ENCODE measurements at regions of chr22 and their contacts with region 1.

Region 1: GRCh38 chr22:39343259-39344048 is 6.3 kb upstream of the SYNGR1 start:
- DNase-seq: peak; percentile 69 to 72
- H3K4me3 ChIP-seq: no peak overlapping the region
- H3K27ac ChIP-seq: no peak overlapping the region
- H3K4me1 ChIP-seq: peaks cover 16% of the 10 kb centered on the region
- H3K27me3 ChIP-seq: no peaks in the 10 kb centered on the region
- CTCF ChIP-seq: peak; percentile 83

Region 2: DNA sequence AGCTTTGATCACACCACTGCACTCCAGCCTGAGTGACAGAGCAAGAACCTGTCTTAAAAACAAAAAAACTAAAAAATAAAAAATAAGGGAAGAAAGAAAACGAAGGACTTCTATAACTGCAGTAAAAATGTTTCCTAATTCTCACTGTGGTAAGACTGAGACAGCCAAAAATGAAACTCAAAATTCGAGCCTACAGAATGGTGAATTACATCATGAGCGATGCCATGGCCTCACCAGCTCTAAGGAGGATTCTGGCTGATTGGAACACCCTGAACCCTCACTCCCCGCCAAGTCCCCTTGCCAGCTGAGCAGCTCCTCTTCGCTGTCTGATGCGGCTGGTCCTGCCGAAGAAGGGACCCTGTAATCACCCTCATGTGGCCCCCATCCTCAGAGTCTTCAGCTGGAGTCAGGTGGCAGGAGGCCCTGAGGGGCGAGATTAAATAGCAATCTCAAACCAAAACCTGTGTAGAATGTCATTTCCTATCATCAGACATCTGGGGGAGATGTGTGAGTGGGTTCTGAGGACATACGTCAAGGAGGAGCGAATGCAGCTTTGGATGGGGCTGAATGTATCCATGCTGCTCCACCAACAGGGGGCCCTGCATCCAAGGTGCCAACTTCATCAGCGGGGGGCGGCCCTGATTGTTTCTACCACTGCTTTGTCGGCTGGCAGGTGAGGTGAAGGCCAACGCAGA is 127.9 kb before region 1 on chr22:
- CTCF ChIA-PET with region 1: no interaction called
- POLR2A ChIA-PET with region 1: no interaction called
- intact Hi-C with region 1: no loop called
- DNase-seq: no peak
- H3K4me3 ChIP-seq: peak overlapping the region; percentile 55; the same call in 1 of the 2 replicates
- H3K27ac ChIP-seq: peak overlapping the region; percentile 87
- H3K4me1 ChIP-seq: peaks cover 51% of the 10 kb centered on the region
- H3K27me3 ChIP-seq: no peaks in the 10 kb centered on the region
- CTCF ChIP-seq: peak; percentile 47; the same call in 1 of the 2 replicates

Region 3: GRCh38 chr22:39234269-39234787 is 109.1 kb before region 1 on chr22:
- CTCF ChIA-PET with region 1: no interaction called
- POLR2A ChIA-PET with region 1: no interaction called
- intact Hi-C with region 1: no loop called
- DNase-seq: no peak
- H3K4me3 ChIP-seq: no peak overlapping the region
- H3K27ac ChIP-seq: no peak overlapping the region
- H3K4me1 ChIP-seq: peaks cover 27% of the 10 kb centered on the region
- H3K27me3 ChIP-seq: no peaks in the 10 kb centered on the region
- CTCF ChIP-seq: no peak

Region 4: GRCh38 chr22:39332441-39333064 is 10.9 kb before region 1 on chr22:
- CTCF ChIA-PET with region 1: interaction called, 11 read pairs
- POLR2A ChIA-PET with region 1: no interaction called
- intact Hi-C with region 1: no loop called
- DNase-seq: no peak
- H3K4me3 ChIP-seq: no peak overlapping the region
- H3K27ac ChIP-seq: no peak overlapping the region
- H3K4me1 ChIP-seq: no peaks in the 10 kb centered on the region
- H3K27me3 ChIP-seq: no peaks in the 10 kb centered on the region
- CTCF ChIP-seq: no peak

Region 5: GRCh38 chr22:39371732-39372131 is 28.3 kb after region 1 on chr22:
- CTCF ChIA-PET with region 1: interaction called, 14 read pairs
- POLR2A ChIA-PET with region 1: no interaction called
- intact Hi-C with region 1: no loop called
- DNase-seq: no peak
- H3K4me3 ChIP-seq: no peak overlapping the region
- H3K27ac ChIP-seq: no peak overlapping the region
- H3K4me1 ChIP-seq: no peaks in the 10 kb centered on the region
- H3K27me3 ChIP-seq: no peaks in the 10 kb centered on the region
- CTCF ChIP-seq: no peak

Region 6: DNA sequence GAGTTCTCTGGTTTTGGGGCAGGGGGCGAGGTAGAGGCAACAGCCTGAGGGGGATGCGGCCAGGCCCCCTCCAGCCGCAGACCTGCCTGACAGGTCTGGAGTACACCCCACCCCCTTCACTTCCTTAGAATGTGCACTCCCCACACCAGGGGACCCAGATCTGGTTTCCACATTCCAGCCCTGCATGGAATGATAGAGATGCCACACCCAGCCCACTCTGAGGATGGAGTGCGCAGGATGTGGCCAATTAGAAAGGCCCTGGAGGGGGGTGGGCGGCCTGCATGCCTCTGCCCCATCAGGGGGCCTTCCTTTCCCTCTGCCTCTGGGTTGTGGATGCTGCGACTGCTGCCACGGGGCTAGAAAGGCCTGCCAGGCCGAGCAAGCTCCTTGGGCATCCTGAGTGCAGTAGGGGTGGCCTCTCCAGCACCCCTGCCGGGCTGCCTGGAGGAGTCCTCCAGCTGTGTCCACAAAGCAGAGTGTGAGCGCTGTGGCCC is 85.2 kb after region 1 on chr22:
- CTCF ChIA-PET with region 1: no interaction called
- POLR2A ChIA-PET with region 1: no interaction called
- intact Hi-C with region 1: no loop called
- DNase-seq: peak in 1 of 2 experiments; percentile 47
- H3K4me3 ChIP-seq: no peak overlapping the region
- H3K27ac ChIP-seq: no peak overlapping the region
- H3K4me1 ChIP-seq: no peaks in the 10 kb centered on the region
- H3K27me3 ChIP-seq: no peaks in the 10 kb centered on the region
- CTCF ChIP-seq: no peak

Region 7: DNA sequence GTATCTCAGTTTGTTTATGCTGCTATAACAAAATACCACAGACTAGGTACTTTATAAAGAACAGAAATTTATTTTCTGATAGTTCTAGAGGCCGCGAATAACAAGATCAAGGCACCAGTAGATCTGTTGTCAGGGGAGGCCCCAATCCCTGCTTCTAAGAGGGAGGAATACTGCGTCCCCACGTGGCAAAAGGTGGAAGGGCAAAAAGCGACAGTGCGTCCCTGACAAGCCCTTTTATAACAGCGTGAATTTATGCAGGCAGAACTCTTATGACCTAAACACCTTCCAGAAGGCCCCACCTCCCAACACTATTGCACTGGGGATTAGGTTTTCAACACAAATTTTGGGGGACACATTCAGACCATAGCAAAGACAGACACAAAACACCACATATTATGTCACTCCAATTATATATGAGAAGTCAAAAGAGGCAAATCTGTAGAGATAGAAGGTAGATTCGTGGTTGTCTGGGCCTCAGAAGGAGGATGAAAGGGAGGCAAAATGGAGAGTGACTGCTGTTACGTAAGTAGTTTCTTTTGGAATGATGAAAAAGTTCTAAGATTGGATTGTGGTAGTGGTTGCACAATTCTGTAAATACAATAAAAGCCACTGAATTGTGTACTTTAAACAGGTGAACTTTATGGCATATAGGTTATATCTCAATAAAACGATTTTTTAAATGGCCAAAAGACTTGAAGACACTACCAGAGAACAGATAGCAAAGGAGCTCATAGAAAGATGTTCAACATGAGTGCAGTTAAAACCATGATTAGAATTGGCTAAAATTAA is 804.1 kb after region 1 on chr22:
- CTCF ChIA-PET with region 1: no interaction called
- POLR2A ChIA-PET with region 1: interaction called, 11 read pairs
- intact Hi-C with region 1: no loop called
- DNase-seq: no peak
- H3K4me3 ChIP-seq: no peak overlapping the region
- H3K27ac ChIP-seq: no peak overlapping the region
- H3K4me1 ChIP-seq: 0 out of 2 replicates have a peak, but pooled peaks cover 4% of the 10 kb centered on the region
- H3K27me3 ChIP-seq: no peaks in the 10 kb centered on the region
- CTCF ChIP-seq: no peak

Region 8: GRCh38 chr22:40651563-40652501 is 1308.4 kb after region 1 on chr22:
- CTCF ChIA-PET with region 1: no interaction called
- POLR2A ChIA-PET with region 1: no interaction called
- intact Hi-C with region 1: no loop called
- DNase-seq: peak; percentile 95 to 99
- H3K4me3 ChIP-seq: peak overlapping the region; percentile 68
- H3K27ac ChIP-seq: peak overlapping the region; percentile 98
- H3K4me1 ChIP-seq: peaks cover 15% of the 10 kb centered on the region
- H3K27me3 ChIP-seq: no peaks in the 10 kb centered on the region
- CTCF ChIP-seq: no peak

Measured in PC-9 (cell line).